ENCODE measurements at regions of chr7 and their contacts with region 1.

Region 1: GRCh38 chr7:32070406-32071360 is at the start of gene PDE1C:
- DNase-seq: peak in 9 of 10 donors; percentile 18 to 80 (median 65)
- H3K4me3 ChIP-seq: peak within 1 kb of the TSS; percentile 45 to 84 (median 70)
- H3K27ac ChIP-seq: peak within 1 kb of the TSS; percentile 58 to 100 (median 96)
- H3K27me3 ChIP-seq: peaks cover 0 to 29% (median 0%) of the 10 kb centered on the region in 45 donors
- CTCF ChIP-seq: peak in 2 of 56 donors; percentile 6 to 11
- total RNA-seq, gene PDE1C: 32.4 to 247 (median 78.1) TPM

Region 2: GRCh38 chr7:31782411-31782991 is 288.2 kb before region 1 on chr7:
- intact Hi-C with region 1: loop called (anchors 5 to 10 kb)
- DNase-seq: no peak
- H3K4me3 ChIP-seq: no peak overlapping the region
- H3K27ac ChIP-seq: peak overlapping the region in 36 of 59 donors; percentile 1 to 81 (median 58)
- H3K27me3 ChIP-seq: no peaks in the 10 kb centered on the region
- CTCF ChIP-seq: peak; percentile 54 to 90 (median 82)

Region 3: GRCh38 chr7:31962246-31962645 is 108.4 kb before region 1 on chr7:
- intact Hi-C with region 1: loop called in 1 of 2 experiments (anchors 10 kb)
- DNase-seq: no peak
- H3K4me3 ChIP-seq: no peak overlapping the region
- H3K27ac ChIP-seq: peak overlapping the region in 3 of 59 donors; percentile 4 to 48 (median 10)
- H3K27me3 ChIP-seq: no peaks in the 10 kb centered on the region
- CTCF ChIP-seq: no peak

Region 4: DNA sequence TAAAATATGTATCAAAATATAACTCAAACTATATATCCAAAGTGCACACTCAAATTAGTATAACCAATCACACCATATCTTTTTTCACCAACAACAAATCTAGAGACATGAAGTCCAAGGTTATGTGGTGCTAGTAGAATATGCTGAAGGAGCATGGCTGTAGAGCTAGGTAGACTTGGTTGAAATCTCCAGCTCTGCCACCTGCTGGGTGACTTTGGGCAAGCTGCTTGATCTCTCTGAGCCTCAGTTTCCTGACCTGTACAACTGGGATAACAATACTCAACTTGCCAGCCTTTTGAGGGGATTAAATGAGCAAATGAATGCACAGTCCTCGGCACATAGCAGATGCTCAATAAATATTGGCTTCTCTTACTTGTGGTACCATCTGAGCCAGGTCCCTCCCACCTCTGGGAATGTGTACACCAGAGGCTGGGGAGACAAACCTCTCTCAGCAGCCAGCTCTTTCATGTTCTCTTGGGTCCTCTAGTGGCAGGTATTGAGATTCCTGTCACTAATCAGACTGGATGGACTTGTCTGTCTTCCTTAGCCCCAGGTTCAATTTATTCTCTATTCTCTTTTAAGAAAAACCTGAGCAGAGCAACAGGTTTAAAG is 93.8 kb after region 1 on chr7:
- intact Hi-C with region 1: loop called (anchors 10 kb)
- DNase-seq: peak in 1 of 10 donors; percentile 28
- H3K4me3 ChIP-seq: no peak overlapping the region
- H3K27ac ChIP-seq: peak overlapping the region in 4 of 59 donors; percentile 28 to 63 (median 44)
- H3K27me3 ChIP-seq: no peaks in the 10 kb centered on the region
- CTCF ChIP-seq: peak; percentile 12 to 77 (median 54)